Mammary epithelial cell (primary cell): ENCODE measurements at regions of chr1 and their contacts with region 1.

Region 1: DNA sequence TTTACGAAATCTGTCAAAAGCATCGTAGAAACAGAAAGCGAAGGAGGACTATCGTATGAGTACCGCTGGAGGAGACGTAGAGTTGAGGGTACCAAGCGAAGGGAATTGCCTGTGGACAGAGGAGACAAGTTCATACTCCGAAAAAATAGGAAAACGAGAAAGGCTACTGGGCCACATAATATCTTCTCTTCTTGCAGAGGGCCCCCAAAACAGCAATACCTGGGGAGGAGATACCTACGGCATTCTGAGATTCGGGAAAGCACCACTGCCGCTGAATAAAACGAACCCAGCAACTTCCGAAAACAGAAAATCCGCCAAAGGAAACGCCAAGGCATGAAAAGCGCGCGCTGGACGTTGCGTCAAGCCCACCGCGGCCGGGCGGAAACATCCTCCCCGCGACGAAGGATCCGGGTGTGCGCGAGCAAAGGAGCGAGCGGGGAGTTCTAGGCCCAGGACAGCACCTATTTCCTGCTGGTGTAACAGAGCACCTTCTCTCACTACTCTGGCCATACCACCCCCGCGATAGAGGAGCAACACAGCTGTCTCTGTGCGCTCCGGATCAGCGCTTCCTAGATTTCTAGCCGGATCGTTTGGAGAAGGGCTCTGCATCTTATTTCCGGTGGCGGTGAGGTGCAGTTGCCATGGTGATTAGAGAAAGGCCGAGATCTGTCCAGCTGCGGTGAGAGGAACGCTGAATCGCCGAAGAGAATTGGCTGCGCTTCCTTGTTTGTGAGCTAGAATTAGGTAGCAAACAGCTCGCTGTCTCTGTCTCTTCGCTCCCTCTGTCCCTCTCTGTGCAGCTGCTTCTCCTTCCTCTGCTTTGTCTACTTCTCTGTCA is at the starts of genes EFCAB7 and ITGB3BP:
- DNase-seq: peak; percentile 98
- H3K4me3 ChIP-seq: peak within 1 kb of the TSS; percentile 59 to 93 (median 90)
- H3K27ac ChIP-seq: peak within 1 kb of the TSS; percentile 93
- H3K4me1 ChIP-seq: peaks cover 9% of the 10 kb centered on the region
- H3K27me3 ChIP-seq: no peaks in the 10 kb centered on the region
- CTCF ChIP-seq: no peak
- total RNA-seq, gene EFCAB7: 4.6 to 7.8 TPM
- total RNA-seq, gene ITGB3BP: 9.7 to 27.3 TPM

Region 2: GRCh38 chr1:62841587-62842169 is 681.4 kb before region 1 on chr1:
- CTCF ChIA-PET with region 1: no interaction called
- dilution Hi-C with region 1: no loop called
- in situ Hi-C with region 1: no loop called
- intact Hi-C with region 1: loop called (anchors 10 kb)
- DNase-seq: peak; percentile 35
- H3K4me3 ChIP-seq: no peak overlapping the region
- H3K27ac ChIP-seq: no peak overlapping the region
- H3K4me1 ChIP-seq: no peaks in the 10 kb centered on the region
- H3K27me3 ChIP-seq: no peaks in the 10 kb centered on the region
- CTCF ChIP-seq: peak; percentile 56 to 58

Region 3: GRCh38 chr1:63367215-63368103 is 155.7 kb before region 1 on chr1 and contains the start of gene ALG6:
- CTCF ChIA-PET with region 1: no interaction called
- dilution Hi-C with region 1: no loop called
- in situ Hi-C with region 1: no loop called
- intact Hi-C with region 1: loop called (anchors 2 kb)
- DNase-seq: peak; percentile 92
- H3K4me3 ChIP-seq: peak within 1 kb of the TSS; percentile 72 to 98 (median 90)
- H3K27ac ChIP-seq: peak within 1 kb of the TSS; percentile 45
- H3K4me1 ChIP-seq: peaks cover 3% of the 10 kb centered on the region
- H3K27me3 ChIP-seq: no peaks in the 10 kb centered on the region
- CTCF ChIP-seq: peak in 1 of 2 donors; percentile 13
- total RNA-seq, gene ALG6: 8.2 to 11.3 TPM

Region 4: GRCh38 chr1:63547621-63548294 is 24.6 kb after region 1 on chr1:
- CTCF ChIA-PET with region 1: no interaction called
- dilution Hi-C with region 1: no loop called
- in situ Hi-C with region 1: no loop called
- intact Hi-C with region 1: loop called (anchors 2 kb)
- DNase-seq: peak; percentile 99
- H3K4me3 ChIP-seq: peak overlapping the region; percentile 7 to 24 (median 10)
- H3K27ac ChIP-seq: peak overlapping the region; percentile 92
- H3K4me1 ChIP-seq: peaks cover 25% of the 10 kb centered on the region
- H3K27me3 ChIP-seq: no peaks in the 10 kb centered on the region
- CTCF ChIP-seq: no peak